ENCODE measurements at regions of chr3 and their contacts with region 1.

Region 1: DNA sequence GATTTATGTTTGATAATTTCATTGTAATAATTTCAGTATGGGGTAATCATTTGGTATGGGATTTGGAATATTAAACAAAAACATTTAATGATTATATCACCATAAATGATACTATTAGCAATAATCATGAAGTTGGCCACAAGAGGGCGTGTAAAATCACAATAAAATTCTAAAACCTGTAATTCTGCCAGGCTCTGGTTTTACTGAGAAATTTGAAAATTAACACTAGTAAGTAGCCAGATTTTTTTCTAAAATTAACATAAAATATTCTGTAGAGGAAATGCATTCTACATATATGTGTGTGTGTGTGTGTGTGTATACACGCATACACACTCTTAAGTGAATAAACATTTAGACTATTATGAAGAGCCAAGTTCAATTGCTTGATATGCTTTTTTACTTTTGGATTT is 40.5 kb downstream of the FEZF2 start:
- DNase-seq: peak; percentile 10
- H3K4me3 ChIP-seq: no peak overlapping the region
- H3K27ac ChIP-seq: no peak overlapping the region
- H3K4me1 ChIP-seq: no peaks in the 10 kb centered on the region
- H3K27me3 ChIP-seq: no peaks in the 10 kb centered on the region
- CTCF ChIP-seq: peak; percentile 56; the same call in 1 of the 2 replicates

Region 2: DNA sequence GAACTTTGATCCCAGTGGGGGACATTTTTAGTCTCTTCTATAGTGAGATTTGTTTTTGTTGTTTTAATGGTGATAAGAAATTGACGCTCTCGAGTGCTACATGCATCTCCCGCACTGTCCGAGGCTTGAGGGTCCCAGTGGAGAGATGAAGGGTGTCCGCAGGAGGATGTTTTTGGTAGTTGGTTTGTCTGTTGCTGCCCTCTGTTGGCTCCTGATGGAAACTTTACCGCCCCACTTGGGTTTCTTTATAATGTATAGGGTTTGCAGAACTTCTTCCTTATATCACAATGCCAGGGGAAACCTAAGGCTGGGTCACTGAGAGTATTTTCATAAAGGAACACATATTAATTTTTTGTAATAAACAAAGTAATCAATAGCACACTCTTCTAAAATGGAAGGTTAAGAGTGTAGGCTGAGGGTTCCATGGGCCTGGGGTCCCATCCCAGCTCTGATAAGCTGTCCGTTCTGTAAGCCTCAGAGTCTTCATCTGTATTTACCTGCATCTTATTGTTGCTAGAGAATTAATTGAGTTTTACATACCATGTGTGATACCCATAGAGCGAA is 225.8 kb after region 1 on chr3:
- CTCF ChIA-PET with region 1: no interaction called
- POLR2A ChIA-PET with region 1: no interaction called
- intact Hi-C with region 1: loop called (anchors 5 kb)
- DNase-seq: peak; percentile 14
- H3K4me3 ChIP-seq: no peak overlapping the region
- H3K27ac ChIP-seq: no peak overlapping the region
- H3K4me1 ChIP-seq: no peaks in the 10 kb centered on the region
- H3K27me3 ChIP-seq: no peaks in the 10 kb centered on the region
- CTCF ChIP-seq: peak; percentile 51